ENCODE measurements at regions of chr2 and their contacts with region 1.

Region 1: DNA sequence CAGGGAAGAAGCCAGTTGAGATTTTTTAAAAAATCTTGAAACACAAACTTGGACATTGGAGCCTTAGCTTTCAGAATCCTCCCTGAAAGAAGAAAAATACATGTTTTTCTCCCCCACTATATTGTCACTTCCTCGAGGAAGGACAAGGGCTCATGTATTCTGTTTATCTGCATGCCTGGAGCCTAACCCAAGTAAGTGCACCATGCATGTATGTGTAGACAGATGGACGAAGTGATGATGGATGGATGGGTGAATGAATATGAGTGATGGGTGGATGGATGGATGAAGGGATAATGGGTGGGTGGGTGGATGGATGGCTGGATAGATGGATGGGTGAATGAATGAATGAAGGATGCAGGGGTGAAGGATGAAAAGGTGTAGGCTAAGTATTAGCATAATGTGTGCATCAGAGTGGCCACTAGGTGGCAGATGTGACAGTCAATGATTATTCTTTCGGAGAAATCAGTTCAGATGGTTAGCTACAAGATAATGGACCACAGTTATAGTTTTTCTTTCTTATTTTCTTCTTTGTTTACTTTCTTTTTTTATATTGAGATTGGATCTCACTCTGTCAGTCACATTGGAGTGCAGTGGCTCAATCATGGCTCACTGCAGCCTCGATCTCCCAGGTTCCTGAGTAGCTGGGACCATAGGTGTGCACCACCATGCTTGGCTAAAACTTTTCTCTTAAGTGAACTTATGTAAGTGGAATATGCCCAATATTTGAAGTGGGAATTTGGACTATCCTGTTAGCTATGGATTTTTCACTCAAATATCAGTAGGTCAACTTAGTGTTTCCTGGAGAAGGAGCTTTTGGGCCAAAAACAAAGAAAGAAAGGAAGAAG is 18.5 kb upstream of the CCDC93 start:
- DNase-seq: peak; percentile 64
- ATAC-seq: peak; percentile 68
- H3K4me3 Mint-ChIP-seq: no peak overlapping the region
- H3K27ac Mint-ChIP-seq: no peak overlapping the region
- H3K4me1 Mint-ChIP-seq: no peaks in the 10 kb centered on the region
- H3K27me3 Mint-ChIP-seq: peaks cover 25% of the 10 kb centered on the region

Region 2: DNA sequence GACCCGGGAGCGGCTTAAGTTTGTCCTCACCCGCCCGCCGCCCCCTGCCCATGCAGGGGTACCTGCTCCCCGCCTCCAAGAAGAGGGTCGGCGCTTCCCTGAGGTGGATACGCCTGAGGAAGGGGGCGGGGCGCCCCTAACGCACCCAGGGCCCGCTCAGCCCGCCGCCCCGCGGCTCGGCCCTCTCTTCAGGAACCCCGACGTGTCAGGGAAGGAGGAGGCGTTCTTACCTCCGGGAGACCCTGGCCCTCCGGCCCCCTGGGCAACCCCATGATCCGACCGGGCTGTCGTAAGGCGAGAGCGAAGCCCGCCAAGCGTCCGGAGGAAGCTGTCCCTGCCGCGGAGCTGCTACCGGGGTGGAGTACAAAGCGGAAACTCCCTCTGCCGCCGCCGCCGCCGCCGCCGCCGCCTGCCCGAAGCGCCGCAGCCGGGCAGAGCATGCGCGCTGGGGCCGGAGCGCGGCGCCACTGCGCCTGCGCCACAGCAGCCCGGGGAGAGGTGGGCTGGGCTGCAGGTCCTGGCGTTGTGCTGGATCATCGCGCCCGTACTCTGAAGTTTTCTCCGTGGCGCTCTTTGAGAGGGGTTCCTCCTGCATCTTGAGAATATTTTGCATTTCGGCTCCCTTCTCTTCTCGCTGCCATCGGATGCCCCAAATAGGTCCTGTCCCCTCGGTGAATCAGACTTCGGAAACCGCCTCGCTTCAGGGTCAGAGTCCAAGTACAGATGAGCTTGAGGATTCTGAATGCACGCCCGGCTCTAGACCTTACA is 18.5 kb before region 1 on chr2 and contains the start of gene CCDC93:
- CTCF ChIA-PET with region 1: interaction called, 21 read pairs
- POLR2A ChIA-PET with region 1: no interaction called
- DNase-seq: peak; percentile 87
- ATAC-seq: peak; percentile 90
- H3K4me3 Mint-ChIP-seq: peak within 1 kb of the TSS; percentile 88
- H3K27ac Mint-ChIP-seq: peak within 1 kb of the TSS; percentile 86
- H3K4me1 Mint-ChIP-seq: peaks cover 39% of the 10 kb centered on the region
- H3K27me3 Mint-ChIP-seq: peaks cover 5% of the 10 kb centered on the region
- total RNA-seq, gene CCDC93: 31.7 to 34.3 TPM

Region 3: DNA sequence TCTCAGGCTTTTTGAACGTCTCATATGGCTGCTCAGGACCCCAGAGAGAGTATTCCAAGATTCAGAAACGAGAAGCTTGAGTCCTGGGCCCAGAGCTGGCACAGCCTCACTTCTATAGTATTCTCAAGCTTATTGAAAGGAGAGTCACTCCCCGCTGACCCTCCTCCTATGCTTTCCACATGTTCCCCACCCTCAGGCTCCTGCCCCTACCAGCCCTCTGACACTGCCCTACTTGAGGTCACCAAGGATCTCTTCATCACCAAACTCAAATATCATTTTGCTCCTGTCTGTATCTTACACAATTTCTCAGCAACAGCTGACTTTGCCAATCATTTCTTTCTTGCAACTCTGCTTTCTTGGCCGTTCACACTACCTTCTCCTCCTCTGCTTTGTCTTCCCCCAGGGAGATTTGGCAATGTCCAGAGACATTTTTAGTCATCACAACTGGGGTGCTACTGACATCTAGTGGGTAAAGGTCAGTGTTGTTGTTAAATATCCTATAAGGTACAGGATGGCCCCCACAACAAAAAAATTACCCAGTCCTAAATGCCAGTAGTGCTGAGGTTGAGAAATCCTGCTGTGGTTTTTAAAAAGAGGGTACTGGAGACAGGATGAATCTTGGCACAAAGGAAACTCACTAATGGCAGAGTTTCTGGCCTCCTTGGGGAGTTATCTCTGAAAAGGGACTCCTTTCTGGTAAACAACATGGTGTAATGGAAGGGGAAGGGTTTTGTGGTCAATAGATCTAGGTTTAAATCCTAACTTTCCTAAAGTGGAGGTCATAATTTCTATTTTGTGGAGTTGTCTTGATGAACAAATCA is 29.0 kb after region 1 on chr2:
- CTCF ChIA-PET with region 1: interaction called, 10 read pairs
- POLR2A ChIA-PET with region 1: no interaction called
- DNase-seq: no peak
- ATAC-seq: no peak
- H3K4me3 Mint-ChIP-seq: no peak overlapping the region
- H3K27ac Mint-ChIP-seq: no peak overlapping the region
- H3K4me1 Mint-ChIP-seq: peaks cover 13% of the 10 kb centered on the region
- H3K27me3 Mint-ChIP-seq: peaks cover 34% of the 10 kb centered on the region

Region 4: DNA sequence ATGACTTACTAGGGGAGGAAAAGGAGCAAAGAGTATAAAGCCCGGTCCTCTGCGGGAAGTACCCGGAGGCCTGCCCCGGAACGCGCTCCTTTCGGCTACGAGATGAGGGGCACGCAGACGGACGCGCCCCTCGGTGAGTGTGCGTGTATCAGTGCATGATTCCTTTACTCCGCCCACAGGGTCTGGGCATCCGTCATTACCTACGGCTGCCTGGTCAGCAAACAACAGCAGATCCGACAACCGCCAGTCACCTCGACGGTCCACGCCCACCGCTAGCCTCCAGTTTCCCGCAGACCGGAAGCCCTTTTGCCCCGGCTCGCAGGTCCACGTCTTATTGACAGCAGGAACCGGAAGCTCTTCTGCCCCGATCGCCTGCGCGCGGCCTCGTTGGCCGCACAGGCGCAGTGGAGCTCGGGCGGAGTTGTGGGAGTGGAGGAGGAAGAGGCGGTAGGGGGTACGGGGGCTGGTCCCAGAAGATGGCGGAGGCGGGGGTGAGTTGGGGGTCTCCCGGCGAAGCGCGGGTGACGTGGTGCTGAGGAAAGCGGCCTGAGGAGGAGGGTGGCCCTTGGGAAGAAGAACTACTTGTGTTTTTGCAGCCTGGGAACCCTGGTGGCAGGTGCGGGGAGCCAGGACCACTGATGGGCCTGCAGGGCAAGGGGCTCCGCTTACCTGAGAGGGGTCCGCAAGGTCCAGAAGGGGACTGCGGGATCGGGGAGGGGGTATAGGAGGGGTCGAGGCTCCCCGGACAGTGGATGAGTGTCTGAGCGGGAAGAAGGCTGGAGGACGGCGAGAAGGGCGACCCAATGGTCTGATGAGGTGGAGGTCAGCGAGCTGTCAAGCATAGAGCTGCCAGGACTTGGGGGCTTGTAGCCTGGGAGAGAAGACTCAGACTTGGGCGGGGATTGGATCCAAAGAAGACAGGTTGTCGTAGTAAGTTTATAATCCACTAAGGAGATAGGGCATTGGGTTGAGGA is 55.9 kb after region 1 on chr2 and contains the start of gene INSIG2:
- CTCF ChIA-PET with region 1: interaction called, 10 read pairs
- POLR2A ChIA-PET with region 1: no interaction called
- DNase-seq: peak; percentile 96
- ATAC-seq: peak; percentile 95
- H3K4me3 Mint-ChIP-seq: peak within 1 kb of the TSS; percentile 92
- H3K27ac Mint-ChIP-seq: peak within 1 kb of the TSS; percentile 89
- H3K4me1 Mint-ChIP-seq: peaks cover 25% of the 10 kb centered on the region
- H3K27me3 Mint-ChIP-seq: peaks cover 11% of the 10 kb centered on the region
- total RNA-seq, gene INSIG2: 30.1 to 32.6 TPM

Measured in activated CD8-positive, alpha-beta T cell treated with anti-CD3 and anti-CD28 coated beads, Interleukin-2, amount 10 ng/mL, durations not matched to agents 7 days and 5 days (primary cell).